H1 (cell line): ENCODE measurements at regions of chr9 and their contacts with region 1.

Region 1: DNA sequence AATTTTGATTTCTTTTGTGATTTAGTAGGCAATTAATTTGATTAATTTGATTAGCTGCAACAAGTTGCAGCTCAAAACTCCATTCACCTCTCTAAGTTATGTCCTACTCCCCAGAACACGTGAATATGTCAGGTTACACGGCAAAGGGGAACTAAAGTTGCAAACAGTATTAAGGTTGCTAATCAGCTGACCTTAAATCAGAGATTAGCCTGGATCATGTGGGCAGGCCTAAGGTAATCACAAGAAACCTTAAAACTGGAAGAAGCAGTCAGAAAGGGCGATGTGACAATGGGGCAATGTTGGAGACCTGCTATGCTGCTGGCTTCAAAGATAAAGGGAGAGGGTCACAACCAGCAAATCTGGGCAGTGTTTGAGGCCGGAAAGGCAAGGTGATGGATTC is 47.3 kb upstream of the ANXA1 start:
- DNase-seq: no peak
- H3K4me3 ChIP-seq: no peak overlapping the region
- H3K27ac ChIP-seq: no peak overlapping the region
- H3K4me1 ChIP-seq: no peaks in the 10 kb centered on the region
- H3K27me3 ChIP-seq: no peaks in the 10 kb centered on the region
- CTCF ChIP-seq: no peak
- EP300 ChIP-seq: no peak
- POLR2A ChIP-seq: no peak
- RAD21 ChIP-seq: no peak

Region 2: GRCh38 chr9:73093740-73094379 is 10.5 kb before region 1 on chr9:
- CTCF ChIA-PET with region 1: interaction called, 17 read pairs
- POLR2A ChIA-PET with region 1: no interaction called
- DNase-seq: no peak
- H3K4me3 ChIP-seq: no peak overlapping the region
- H3K27ac ChIP-seq: no peak overlapping the region
- H3K4me1 ChIP-seq: no peaks in the 10 kb centered on the region; a peak in 1 of 7 replicates
- H3K27me3 ChIP-seq: no peaks in the 10 kb centered on the region
- CTCF ChIP-seq: no peak
- EP300 ChIP-seq: no peak
- POLR2A ChIP-seq: no peak
- RAD21 ChIP-seq: no peak

Region 3: DNA sequence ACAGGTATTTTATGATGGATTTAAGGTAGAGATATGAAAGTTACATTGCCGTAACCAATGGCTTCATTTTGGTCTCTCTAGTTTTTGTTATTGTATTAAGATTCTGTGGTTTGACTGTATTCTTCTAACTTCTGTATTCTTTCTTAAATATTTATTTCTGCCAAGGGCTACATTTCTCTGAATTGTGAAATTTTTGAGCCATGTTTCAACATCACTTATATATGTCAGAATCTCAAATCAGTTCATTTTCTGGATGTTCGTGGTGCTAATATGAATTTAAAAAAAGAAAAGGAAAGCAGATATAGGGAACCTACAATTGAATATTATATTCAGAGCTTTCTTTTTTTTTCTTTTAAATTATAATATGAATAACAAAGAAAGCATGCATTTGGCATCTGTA is 190.0 kb after region 1 on chr9:
- CTCF ChIA-PET with region 1: no interaction called
- POLR2A ChIA-PET with region 1: no interaction called
- DNase-seq: no peak
- H3K4me3 ChIP-seq: no peak overlapping the region
- H3K27ac ChIP-seq: no peak overlapping the region
- H3K4me1 ChIP-seq: no peaks in the 10 kb centered on the region
- H3K27me3 ChIP-seq: no peaks in the 10 kb centered on the region
- CTCF ChIP-seq: no peak
- EP300 ChIP-seq: no peak
- POLR2A ChIP-seq: no peak
- RAD21 ChIP-seq: no peak